Lower leg skin (tissue), 4 donors: ENCODE measurements at regions of chr11 and their contacts with region 1.

Region 1: DNA sequence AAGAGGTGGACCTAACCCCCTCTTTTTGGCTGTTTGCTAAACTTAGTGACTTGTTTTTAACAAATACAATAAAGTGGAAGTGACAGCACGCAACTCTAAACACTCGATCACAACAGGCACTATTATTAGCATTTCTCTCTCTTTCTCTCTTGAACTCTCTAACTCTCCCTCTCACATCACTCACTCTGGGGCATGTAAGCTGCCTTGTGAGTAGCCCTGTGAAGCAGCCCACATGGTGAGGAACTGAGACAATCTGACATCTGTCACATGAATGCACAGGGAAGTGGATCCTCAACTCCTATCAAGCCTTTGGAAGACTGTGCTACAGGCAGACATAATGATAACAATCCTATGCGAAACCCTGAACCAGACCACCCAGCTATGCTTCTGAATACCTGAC is 609.0 kb upstream of the CNTN5 start:
- DNase-seq: no peak
- H3K4me3 ChIP-seq: no peak overlapping the region
- CTCF ChIP-seq: no peak
- POLR2A ChIP-seq: no peak

Region 2: DNA sequence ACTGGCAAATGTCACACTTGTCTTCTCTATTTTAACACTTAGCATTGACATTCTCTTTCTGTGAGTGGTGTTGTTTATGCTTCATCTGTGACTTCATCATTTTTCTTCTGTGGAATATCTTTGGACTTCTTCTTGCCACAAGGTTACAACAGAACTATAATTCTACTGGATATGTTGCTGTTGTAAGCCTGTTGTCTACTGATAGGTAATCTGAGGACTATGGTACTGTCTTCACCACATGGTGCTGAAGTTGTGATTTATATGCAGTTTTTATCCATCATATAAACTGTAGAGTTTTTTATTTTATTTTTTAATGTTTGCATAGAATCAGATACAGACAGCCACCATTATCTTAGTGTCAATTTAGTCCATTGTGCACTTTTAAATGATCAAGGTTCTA is 13.3 kb before region 1 on chr11:
- intact Hi-C with region 1: loop called (anchors 2 kb)
- DNase-seq: no peak
- H3K4me3 ChIP-seq: no peak overlapping the region
- CTCF ChIP-seq: no peak
- POLR2A ChIP-seq: no peak